ENCODE measurements at regions of chr10 and their contacts with region 1.

Region 1: GRCh38 chr10:112314822-112315474 is 31.7 kb downstream of the TECTB start:
- DNase-seq: peak; percentile 72
- CTCF ChIP-seq: peak; percentile 81

Region 2: DNA sequence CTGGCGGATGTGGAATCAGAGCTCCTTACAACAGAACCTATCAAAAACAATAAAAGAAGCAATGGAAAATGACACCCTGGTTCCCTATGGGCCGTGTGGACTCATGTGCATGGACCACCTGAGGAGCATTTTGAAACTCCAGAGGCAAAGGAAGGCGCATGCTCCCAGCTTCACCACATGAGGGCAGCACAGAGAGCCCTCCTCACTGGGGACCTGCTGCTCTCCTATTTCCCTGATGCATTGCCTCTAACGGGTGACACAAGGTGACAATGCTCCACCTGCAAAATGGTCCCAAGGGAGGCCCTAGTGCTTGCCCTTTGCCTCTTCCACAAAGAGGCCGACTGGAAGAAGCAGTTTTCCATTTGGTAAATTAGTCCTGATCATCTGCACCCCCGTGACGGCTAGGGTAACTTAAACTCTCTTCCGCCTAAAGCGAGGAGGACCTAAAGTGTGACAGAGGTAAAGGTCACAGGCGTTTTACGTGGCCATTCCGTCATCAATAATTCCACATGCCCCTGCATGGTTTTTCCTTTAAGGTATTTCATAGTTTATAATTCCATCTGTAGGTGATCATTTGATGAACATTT is 199.1 kb before region 1 on chr10:
- CTCF ChIA-PET with region 1: interaction called, 19 read pairs
- POLR2A ChIA-PET with region 1: no interaction called
- DNase-seq: peak; percentile 72
- CTCF ChIP-seq: peak; percentile 74

Region 3: DNA sequence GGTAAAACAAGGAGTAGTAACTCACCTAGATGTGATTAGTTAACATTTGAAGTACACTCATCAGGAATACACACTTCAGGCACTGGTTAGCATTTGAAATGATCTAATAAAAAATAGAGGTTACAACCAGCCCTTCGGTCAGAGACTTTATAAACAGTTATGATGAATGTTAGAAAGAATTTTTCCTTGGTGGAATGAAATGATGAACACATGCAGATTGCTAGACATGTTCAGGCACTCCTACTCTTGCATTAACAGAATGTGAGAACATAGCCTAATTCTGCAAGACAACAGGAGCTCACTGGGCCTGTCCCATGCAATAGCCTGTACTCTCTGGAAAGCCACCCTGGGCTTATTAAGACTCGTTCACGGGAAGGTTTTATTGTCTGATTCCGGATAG is 79.0 kb before region 1 on chr10:
- CTCF ChIA-PET with region 1: no interaction called
- POLR2A ChIA-PET with region 1: no interaction called
- DNase-seq: no peak
- CTCF ChIP-seq: no peak

Region 4: DNA sequence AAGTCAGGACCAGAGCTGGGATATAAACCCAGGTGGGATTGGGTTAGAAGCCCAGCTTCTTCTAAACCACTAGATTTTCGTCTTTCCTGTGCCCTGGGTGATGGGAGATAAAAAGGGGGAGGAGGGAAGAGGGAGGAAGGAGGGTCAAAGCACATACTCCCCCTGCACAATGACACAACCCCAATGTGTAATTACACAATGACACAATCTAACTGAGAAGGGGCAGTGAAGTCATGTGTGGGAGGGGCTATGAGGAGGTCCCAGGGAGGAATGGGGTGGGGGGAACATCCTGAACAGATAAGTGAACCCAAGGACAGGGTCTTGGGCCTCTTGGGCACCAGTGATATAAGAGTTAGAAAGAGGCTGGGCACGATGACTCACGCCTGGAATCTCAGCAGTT is 12.7 kb after region 1 on chr10:
- CTCF ChIA-PET with region 1: interaction called, 11 read pairs
- POLR2A ChIA-PET with region 1: no interaction called
- DNase-seq: no peak
- CTCF ChIP-seq: no peak

Measured in GM10248 (cell line).